T-cell (primary cell): ENCODE measurements at regions of chr2 and their contacts with region 1.

Region 1: GRCh38 chr2:216687646-216688045 is 7.7 kb downstream of the IGFBP5 start:
- DNase-seq: peak in 4 of 35 experiments; percentile 11 to 36 (median 22)
- ATAC-seq: no peak
- H3K4me3 ChIP-seq: no peak overlapping the region
- H3K4me3 Mint-ChIP-seq: no peak overlapping the region
- H3K27ac ChIP-seq: no peak overlapping the region
- H3K27ac Mint-ChIP-seq: no peak overlapping the region
- H3K4me1 ChIP-seq: peaks cover 3 to 19% of the 10 kb centered on the region in 2 experiments
- H3K4me1 Mint-ChIP-seq: peaks cover 12 to 18% (median 17%) of the 10 kb centered on the region in 3 donors
- H3K27me3 ChIP-seq: peaks cover 0 to 64% of the 10 kb centered on the region in 2 experiments
- H3K27me3 Mint-ChIP-seq: peaks cover 27 to 74% of the 10 kb centered on the region in 2 donors

Region 2: DNA sequence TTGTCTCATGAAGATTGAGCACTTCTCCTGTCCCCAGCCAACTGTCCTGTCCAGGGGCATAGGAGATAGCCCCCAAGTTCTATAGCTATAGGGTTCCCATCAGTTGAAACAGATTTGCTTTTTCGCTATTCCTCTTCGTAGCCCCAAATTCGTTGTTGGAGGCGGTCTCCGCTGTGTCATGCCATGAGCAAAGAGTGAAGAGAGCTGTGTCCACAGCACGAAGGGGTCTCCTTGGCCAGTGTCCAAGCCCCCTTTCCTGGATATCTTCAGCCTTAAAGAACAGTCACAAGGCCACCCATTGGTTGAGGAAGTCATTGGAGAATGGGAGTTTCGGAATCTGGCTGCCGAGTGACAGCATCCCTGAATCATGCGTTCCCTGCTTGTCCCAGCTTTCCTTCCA is 13.3 kb before region 1 on chr2:
- CTCF ChIA-PET with region 1: interaction called in 1 of 2 experiments, 13 read pairs
- POLR2A ChIA-PET with region 1: no interaction called
- DNase-seq: no peak
- ATAC-seq: no peak
- H3K4me3 ChIP-seq: no peak overlapping the region
- H3K4me3 Mint-ChIP-seq: no peak overlapping the region
- H3K27ac ChIP-seq: no peak overlapping the region
- H3K27ac Mint-ChIP-seq: no peak overlapping the region
- H3K4me1 ChIP-seq: no peaks in the 10 kb centered on the region
- H3K4me1 Mint-ChIP-seq: no peaks in the 10 kb centered on the region
- H3K27me3 ChIP-seq: peaks cover 0 to 32% of the 10 kb centered on the region in 2 experiments
- H3K27me3 Mint-ChIP-seq: peaks cover 19 to 26% of the 10 kb centered on the region in 2 donors

Region 3: DNA sequence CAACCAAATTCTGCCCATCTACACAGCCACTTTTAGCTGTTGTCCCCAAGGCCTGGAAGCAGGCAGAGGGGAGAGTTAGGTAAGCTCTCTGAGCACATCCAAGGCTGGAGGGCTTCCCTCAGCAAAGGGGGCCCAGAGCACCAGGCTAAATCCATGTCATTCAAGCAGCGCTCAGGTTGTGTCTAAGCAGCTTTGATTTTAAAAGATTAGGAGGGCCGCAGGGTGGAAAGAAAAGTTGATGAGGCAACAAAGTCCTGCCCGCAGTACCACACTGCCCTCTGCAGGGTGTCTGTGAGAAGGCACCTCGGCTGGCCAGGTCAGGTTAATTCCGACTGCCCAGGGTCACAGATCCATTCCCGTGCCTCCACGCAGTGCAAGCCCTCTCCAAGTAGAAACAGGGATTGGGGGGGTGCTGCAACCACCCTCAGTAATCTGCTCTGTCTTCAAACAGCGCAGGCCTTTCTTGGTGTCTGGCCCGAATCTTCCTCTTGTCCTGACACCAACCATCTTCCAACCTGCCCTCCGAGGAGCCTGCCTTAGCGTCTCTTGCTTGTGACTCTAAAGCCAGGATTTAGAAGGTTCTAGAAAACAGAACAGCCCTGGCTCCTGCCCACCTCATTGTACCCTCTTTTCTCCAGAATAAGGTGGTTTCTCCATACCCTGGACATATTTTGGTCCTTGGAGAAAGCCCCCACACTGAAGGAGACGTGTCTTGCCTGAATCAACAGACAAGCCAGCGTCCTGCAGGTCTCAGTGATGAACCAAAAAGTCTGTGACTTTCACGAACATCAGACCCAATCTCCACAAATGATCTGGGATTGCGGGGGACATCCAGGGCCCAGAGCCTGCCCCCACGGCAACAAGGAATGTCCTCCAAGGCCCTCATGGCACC is 1026.0 kb after region 1 on chr2:
- CTCF ChIA-PET with region 1: interaction called, 9 to 17 read pairs
- POLR2A ChIA-PET with region 1: no interaction called
- DNase-seq: peak; percentile 29 to 74 (median 55)
- ATAC-seq: peak in 3 of 4 experiments; percentile 63 to 70 (median 70)
- H3K4me3 ChIP-seq: no peak overlapping the region
- H3K4me3 Mint-ChIP-seq: no peak overlapping the region
- H3K27ac ChIP-seq: no peak overlapping the region
- H3K27ac Mint-ChIP-seq: no peak overlapping the region
- H3K4me1 ChIP-seq: peaks cover 7 to 9% of the 10 kb centered on the region in 2 experiments
- H3K4me1 Mint-ChIP-seq: peaks cover 3 to 10% (median 10%) of the 10 kb centered on the region in 3 donors
- H3K27me3 ChIP-seq: peaks cover 2 to 20% of the 10 kb centered on the region in 2 experiments
- H3K27me3 Mint-ChIP-seq: peaks cover 0 to 15% of the 10 kb centered on the region in 2 donors